ENCODE measurements at regions of chr9 and their contacts with region 1.

Region 1: DNA sequence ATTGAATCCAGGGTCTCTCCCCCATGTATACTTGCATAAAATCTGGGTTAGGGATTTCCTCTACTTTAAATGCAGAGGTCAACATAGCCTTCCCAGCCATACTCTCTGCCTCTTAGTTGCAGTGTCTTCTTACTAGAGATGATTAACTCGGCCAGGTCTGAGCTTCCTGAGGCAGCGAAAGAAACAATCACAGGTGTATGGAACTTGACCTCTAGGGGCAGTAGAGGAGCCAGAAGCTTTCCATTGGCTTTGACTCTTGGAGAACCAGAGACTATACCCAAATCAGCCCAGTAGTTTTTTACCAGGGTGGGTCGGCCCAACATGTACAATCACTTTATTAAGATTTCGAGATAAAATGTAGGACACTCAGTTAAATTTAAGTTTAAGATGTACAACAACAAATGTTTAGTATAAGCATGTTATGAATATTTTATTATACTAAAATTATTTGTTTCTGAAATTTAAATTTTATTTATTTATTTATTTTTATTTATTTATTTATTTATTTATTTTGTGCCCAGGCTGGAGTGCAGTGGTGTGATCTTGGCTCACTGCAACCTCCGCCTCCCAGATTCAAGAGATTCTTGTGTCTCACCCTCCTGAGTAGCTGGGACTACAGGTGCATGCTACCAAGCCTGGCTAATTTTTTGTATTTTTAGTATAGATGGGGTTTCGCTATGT is 48.0 kb upstream of the DMRT3 start:
- DNase-seq: peak; percentile 53
- ATAC-seq: peak; percentile 97
- H3K4me3 Mint-ChIP-seq: no peak overlapping the region
- H3K27ac Mint-ChIP-seq: no peak overlapping the region
- H3K4me1 Mint-ChIP-seq: no peaks in the 10 kb centered on the region
- H3K27me3 Mint-ChIP-seq: no peaks in the 10 kb centered on the region; the same call in 1 of the 2 replicates
- CTCF ChIP-seq: peak; percentile 37; the same call in 1 of the 2 replicates

Region 2: DNA sequence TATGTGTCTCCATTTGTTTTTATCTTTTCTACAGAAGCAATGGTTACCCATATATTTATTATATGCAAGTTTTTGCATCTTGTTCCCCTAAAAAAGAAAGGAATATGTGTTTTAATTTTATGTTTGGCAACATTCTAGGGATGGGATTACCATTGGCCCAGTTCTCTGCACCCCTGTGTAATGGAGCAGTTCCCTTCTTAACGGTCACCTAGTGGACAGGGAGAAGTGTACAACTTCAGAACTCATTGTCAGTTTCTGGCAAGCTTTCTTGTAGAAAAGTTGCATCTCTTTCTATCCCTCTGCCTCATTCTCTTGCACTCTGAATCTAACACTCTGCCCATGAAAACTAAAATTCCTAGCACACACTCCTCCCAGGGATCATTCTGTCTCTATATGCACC is 635.6 kb before region 1 on chr9:
- CTCF ChIA-PET with region 1: no interaction called
- POLR2A ChIA-PET with region 1: no interaction called
- DNase-seq: no peak
- ATAC-seq: peak; percentile 32; the same call in 1 of the 2 replicates
- H3K4me3 Mint-ChIP-seq: no peak overlapping the region
- H3K27ac Mint-ChIP-seq: no peak overlapping the region
- H3K4me1 Mint-ChIP-seq: 0 out of 2 replicates have a peak, but pooled peaks cover 2% of the 10 kb centered on the region
- H3K27me3 Mint-ChIP-seq: no peaks in the 10 kb centered on the region; the same call in 1 of the 2 replicates
- CTCF ChIP-seq: no peak

Region 3: DNA sequence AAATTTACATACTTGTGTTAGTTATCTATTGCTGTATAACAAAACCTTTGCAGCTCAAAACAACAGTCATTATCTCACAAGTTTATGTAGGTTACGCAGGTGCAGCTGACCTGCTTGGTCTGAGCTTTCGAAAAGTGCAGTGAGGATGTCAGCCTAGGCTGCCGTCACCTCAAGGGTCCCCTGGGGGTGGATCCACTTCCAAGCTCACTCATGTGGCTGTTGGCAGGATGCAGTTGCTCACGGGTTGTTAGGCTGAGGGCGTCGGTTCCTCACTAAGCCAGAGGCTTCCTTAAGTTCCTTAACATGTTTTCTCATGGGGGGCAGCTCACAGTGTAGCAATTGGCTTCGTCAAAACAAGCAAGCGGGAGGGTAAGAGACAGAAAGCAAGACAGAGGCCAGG is 574.0 kb before region 1 on chr9:
- CTCF ChIA-PET with region 1: no interaction called
- POLR2A ChIA-PET with region 1: no interaction called
- DNase-seq: no peak
- ATAC-seq: no peak; the same call in 1 of the 2 replicates
- H3K4me3 Mint-ChIP-seq: no peak overlapping the region
- H3K27ac Mint-ChIP-seq: no peak overlapping the region
- H3K4me1 Mint-ChIP-seq: peaks cover 4% of the 10 kb centered on the region; the same call in 1 of the 2 replicates
- H3K27me3 Mint-ChIP-seq: no peaks in the 10 kb centered on the region
- CTCF ChIP-seq: no peak

Region 4: DNA sequence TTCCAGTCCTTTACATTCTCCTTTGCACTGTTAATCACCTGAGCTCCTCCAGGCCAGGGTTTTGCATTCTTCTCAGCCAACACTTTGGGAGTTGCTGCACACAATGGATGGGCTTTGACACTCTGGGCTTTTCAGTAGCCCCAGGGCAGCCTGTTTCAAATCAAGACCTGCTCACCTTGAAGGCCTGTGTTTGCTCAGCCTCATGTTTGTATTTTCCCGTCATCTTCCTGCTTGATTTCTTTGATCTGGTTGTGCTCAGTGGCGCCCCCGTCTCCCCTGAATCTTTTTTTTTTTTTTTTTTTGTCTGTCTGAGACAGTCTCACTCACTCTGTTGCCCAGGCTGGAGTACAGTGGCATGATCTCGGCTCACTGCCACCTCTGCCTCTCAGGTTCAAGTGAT is 46.0 kb before region 1 on chr9:
- CTCF ChIA-PET with region 1: no interaction called
- POLR2A ChIA-PET with region 1: no interaction called
- DNase-seq: no peak
- ATAC-seq: peak; percentile 46
- H3K4me3 Mint-ChIP-seq: no peak overlapping the region
- H3K27ac Mint-ChIP-seq: no peak overlapping the region
- H3K4me1 Mint-ChIP-seq: 0 out of 2 replicates have a peak, but pooled peaks cover 3% of the 10 kb centered on the region
- H3K27me3 Mint-ChIP-seq: peaks cover 11% of the 10 kb centered on the region; the same call in 1 of the 2 replicates
- CTCF ChIP-seq: no peak

Region 5: GRCh38 chr9:893843-894420 is 34.6 kb before region 1 on chr9:
- CTCF ChIA-PET with region 1: interaction called, 19 read pairs
- POLR2A ChIA-PET with region 1: interaction called, 6 read pairs
- DNase-seq: peak; percentile 64
- ATAC-seq: peak; percentile 89
- H3K4me3 Mint-ChIP-seq: no peak overlapping the region
- H3K27ac Mint-ChIP-seq: no peak overlapping the region
- H3K4me1 Mint-ChIP-seq: peaks cover 7% of the 10 kb centered on the region
- H3K27me3 Mint-ChIP-seq: peaks cover 8% of the 10 kb centered on the region
- CTCF ChIP-seq: peak; percentile 71

Region 6: DNA sequence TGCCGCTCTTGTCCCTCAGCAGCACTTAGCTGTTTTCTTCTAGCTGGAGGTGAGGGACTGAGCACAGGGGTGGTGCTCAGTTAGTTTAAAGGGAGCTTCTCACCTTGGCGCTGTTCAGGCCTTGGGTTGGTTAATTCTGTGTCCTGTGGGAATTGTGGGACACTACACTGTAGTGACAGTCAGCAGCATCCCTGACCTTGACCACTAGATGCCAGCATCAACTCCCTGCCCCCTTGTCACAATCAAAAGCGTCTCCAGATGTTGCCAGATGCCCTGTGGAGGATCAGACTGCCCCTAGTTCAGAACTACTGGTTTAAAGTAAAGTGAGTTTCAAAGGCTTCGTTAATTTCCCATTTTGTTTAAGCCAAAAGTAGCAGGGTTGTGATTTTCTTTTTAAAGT is 17.5 kb before region 1 on chr9:
- CTCF ChIA-PET with region 1: interaction called, 43 read pairs
- POLR2A ChIA-PET with region 1: no interaction called
- DNase-seq: peak; percentile 41
- ATAC-seq: peak; percentile 61
- H3K4me3 Mint-ChIP-seq: no peak overlapping the region
- H3K27ac Mint-ChIP-seq: no peak overlapping the region
- H3K4me1 Mint-ChIP-seq: peaks cover 39% of the 10 kb centered on the region
- H3K27me3 Mint-ChIP-seq: no peaks in the 10 kb centered on the region; the same call in 1 of the 2 replicates
- CTCF ChIP-seq: no peak

Region 7: DNA sequence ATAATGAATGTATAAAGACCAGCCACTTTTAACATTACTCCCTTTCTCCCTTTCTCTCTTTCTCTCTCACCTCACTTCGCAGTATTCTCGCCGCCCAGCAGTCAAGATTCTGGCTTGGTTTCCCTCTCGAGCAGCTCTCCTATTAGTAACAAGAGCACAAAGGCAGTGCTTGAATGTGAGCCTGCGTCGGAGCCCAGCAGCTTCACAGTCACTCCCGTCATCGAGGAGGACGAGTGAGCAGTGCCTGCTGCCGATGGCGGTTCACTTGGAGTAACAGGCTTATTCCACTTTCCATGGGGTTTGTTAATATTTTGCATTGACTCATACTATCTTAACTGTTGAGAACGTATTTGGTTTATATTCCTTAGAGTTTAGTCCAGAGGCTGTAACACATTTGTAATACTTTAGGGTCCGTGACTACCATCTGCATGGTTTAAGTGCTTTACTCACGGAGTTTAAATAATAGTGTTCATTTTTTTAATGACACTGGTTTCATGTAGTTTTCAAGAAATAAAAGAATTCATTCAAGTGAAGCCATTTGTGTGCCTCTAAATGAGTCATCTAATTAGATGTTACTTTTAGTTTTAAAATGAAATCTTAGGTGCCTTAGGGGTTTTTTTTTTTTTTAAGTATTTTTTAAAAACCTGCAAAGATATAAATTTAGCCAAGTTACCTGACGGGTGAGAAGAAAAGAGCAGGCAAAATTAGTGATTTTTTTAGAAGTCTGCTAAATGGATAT is 39.6 kb after region 1 on chr9:
- CTCF ChIA-PET with region 1: interaction called, 17 read pairs
- POLR2A ChIA-PET with region 1: no interaction called
- DNase-seq: peak; percentile 63
- ATAC-seq: peak; percentile 34
- H3K4me3 Mint-ChIP-seq: peak overlapping the region; percentile 57
- H3K27ac Mint-ChIP-seq: peak overlapping the region; percentile 53
- H3K4me1 Mint-ChIP-seq: peaks cover 45% of the 10 kb centered on the region
- H3K27me3 Mint-ChIP-seq: peaks cover 98% of the 10 kb centered on the region
- CTCF ChIP-seq: no peak

Region 8: DNA sequence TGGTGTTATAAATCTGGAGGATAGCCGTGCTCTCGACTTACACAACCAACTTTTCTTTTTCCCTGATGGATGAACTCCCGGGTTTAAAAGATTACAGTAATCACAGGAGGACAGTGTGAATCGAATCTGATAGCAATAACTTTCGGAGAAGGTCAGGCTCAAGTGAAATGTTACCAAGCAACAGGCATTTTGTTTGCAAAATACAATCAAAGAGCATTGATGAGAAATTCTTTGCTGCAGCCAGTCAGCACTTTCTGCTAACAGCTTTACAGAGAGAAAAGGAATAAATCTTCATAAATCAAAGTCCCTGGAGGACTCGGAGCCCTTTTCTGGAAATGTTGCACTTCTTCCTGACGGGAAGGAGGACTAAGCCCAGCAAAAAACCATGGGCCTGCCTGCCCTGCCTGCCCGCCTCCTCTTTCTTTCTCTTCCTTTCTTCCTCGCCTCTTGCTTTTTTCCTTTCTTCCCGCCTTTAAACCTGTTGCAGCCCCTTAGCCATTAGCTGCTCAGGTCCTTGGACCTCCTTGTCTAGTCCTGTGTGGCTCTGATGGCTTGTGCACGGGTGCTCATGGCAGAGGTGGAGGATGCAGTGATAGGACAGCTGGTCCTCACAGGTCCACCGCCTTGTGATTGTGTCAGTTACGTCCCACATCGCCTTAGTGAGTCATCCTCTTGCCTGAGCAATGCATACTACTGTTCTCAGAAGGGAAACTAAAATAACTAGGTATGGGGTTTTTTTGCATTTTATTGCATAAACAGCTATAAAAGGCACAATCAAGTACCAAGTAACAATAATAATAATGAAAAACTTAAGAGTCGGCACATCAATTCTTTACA is 54.1 kb after region 1 on chr9:
- CTCF ChIA-PET with region 1: interaction called, 14 read pairs
- POLR2A ChIA-PET with region 1: no interaction called
- DNase-seq: no peak
- ATAC-seq: no peak
- H3K4me3 Mint-ChIP-seq: no peak overlapping the region
- H3K27ac Mint-ChIP-seq: no peak overlapping the region
- H3K4me1 Mint-ChIP-seq: peaks cover 24% of the 10 kb centered on the region
- H3K27me3 Mint-ChIP-seq: peaks cover 98% of the 10 kb centered on the region
- CTCF ChIP-seq: no peak

Measured in WTC11 (cell line).